Activated B cell treated with CpG ODN at 0.5 μM for 24 hours (primary cell): ENCODE measurements at regions of chr22 and their contacts with region 1.

Region 1: GRCh38 chr22:36331306-36331911 is 56.4 kb downstream of the MYH9 start:
- DNase-seq: peak; percentile 59
- ATAC-seq: peak; percentile 57
- H3K4me3 Mint-ChIP-seq: peak overlapping the region; percentile 82
- H3K27ac Mint-ChIP-seq: peak overlapping the region; percentile 99
- H3K4me1 Mint-ChIP-seq: peaks cover 95% of the 10 kb centered on the region
- H3K27me3 Mint-ChIP-seq: no peaks in the 10 kb centered on the region
- CTCF ChIP-seq: no peak

Region 2: DNA sequence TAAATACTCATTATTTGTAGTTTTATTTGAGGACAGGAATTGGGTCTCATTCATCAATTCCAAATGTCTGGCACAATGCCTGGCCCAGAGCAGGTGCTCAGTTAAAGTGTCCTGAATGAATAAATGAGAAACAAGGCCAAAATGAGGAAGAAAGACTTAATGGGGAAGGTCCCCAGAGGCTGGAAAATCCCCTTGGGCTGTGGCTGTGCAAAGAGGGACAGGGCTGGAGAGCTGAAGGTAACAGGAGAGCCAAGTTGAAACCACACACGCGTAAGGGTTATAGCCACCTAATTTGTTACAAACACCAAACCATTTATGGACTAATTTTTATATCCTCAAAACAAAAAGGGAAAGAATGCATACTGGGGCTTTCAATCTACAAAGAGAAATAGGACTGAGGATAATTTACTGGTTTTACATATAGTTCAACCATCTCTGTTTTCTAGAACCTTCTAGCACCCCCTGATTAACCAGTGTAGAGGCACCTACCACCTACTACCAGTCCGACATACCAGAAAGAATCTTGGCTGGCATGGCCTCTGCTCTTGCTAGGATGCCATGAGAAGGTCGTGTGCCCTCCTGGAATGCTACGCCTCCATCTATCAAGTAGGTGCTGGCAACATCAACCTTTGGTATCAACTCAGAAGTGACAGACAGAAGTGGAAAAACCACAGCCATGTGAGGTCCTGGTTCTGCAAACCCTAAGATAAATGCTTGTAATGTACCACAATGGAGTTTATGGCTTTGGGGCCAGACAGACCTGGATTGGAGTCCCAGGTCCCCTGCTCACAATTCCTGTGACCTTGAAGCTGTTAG is 28.0 kb after region 1 on chr22:
- CTCF ChIA-PET with region 1: interaction called, 3 read pairs
- POLR2A ChIA-PET with region 1: interaction called, 25 read pairs
- intact Hi-C with region 1: loop called (anchors 2 kb)
- DNase-seq: peak; percentile 59
- ATAC-seq: peak; percentile 85
- H3K4me3 Mint-ChIP-seq: peak overlapping the region; percentile 72
- H3K27ac Mint-ChIP-seq: peak overlapping the region; percentile 95
- H3K4me1 Mint-ChIP-seq: peaks cover 99% of the 10 kb centered on the region
- H3K27me3 Mint-ChIP-seq: no peaks in the 10 kb centered on the region
- CTCF ChIP-seq: no peak

Region 3: GRCh38 chr22:36369922-36370791 is 38.7 kb after region 1 on chr22:
- CTCF ChIA-PET with region 1: interaction called, 4 read pairs
- POLR2A ChIA-PET with region 1: interaction called, 66 read pairs
- intact Hi-C with region 1: loop called (anchors 1 kb)
- DNase-seq: peak; percentile 51
- ATAC-seq: peak; percentile 89
- H3K4me3 Mint-ChIP-seq: peak overlapping the region; percentile 79
- H3K27ac Mint-ChIP-seq: peak overlapping the region; percentile 91
- H3K4me1 Mint-ChIP-seq: peaks cover 96% of the 10 kb centered on the region
- H3K27me3 Mint-ChIP-seq: no peaks in the 10 kb centered on the region
- CTCF ChIP-seq: no peak

Region 4: DNA sequence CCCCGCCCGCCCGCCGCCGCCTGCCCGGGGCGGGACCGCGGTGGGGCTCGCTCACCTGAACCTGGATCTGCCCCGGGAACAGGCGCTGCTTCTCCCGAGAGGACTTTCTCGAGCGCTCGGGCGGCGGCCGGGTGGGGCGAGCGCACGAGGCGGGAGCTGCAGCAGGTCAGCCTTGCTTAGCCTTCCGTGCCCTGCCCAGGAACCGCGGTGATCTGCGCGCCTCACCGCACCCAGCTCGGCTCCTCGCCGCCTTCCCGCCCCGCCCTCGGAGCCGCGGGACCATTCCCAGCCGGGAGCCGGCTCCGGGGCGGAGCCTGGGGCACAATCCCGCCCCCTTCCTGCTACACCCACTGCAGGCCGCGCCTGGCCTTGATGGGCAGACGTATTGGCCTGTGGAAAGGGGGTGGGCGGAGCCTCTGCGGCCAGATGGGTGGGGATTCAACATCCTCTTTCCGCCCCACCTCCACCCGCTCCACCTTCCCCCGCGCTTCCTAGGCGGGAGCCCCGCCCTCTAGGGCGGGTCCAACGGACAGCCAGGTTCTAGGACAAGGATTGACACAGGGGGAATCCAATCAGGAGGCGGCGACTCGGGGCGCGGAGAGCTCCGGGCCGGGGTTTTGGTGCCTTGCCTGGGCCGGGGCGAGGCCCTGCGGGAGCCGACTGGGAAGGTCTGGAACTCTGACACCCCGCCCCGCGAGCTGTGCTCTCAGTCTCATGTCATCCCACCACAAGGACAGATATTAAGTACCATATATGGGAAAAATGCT is 56.5 kb after region 1 on chr22 and contains the start of gene MYH9:
- CTCF ChIA-PET with region 1: interaction called, 6 read pairs
- POLR2A ChIA-PET with region 1: interaction called, 86 read pairs
- intact Hi-C with region 1: loop called (anchors 1 kb)
- DNase-seq: peak; percentile 97
- ATAC-seq: peak; percentile 79
- H3K4me3 Mint-ChIP-seq: peak within 1 kb of the TSS; percentile 94
- H3K27ac Mint-ChIP-seq: peak within 1 kb of the TSS; percentile 97
- H3K4me1 Mint-ChIP-seq: peaks cover 64% of the 10 kb centered on the region
- H3K27me3 Mint-ChIP-seq: no peaks in the 10 kb centered on the region
- CTCF ChIP-seq: no peak
- total RNA-seq, gene MYH9: 714 and 755 TPM in 2 replicates

Region 5: GRCh38 chr22:36470162-36470993 is 139.0 kb after region 1 on chr22:
- CTCF ChIA-PET with region 1: interaction called, 30 read pairs
- POLR2A ChIA-PET with region 1: interaction called, 8 read pairs
- intact Hi-C with region 1: loop called (anchors 1 kb)
- DNase-seq: peak; percentile 62
- ATAC-seq: peak; percentile 96
- H3K4me3 Mint-ChIP-seq: no peak overlapping the region
- H3K27ac Mint-ChIP-seq: no peak overlapping the region
- H3K4me1 Mint-ChIP-seq: peaks cover 6% of the 10 kb centered on the region
- H3K27me3 Mint-ChIP-seq: no peaks in the 10 kb centered on the region
- CTCF ChIP-seq: no peak

Region 6: GRCh38 chr22:36528795-36529751 is 197.7 kb after region 1 on chr22 and contains the start of gene EIF3D:
- CTCF ChIA-PET with region 1: no interaction called
- POLR2A ChIA-PET with region 1: interaction called, 3 read pairs
- intact Hi-C with region 1: loop called (anchors 1 kb)
- DNase-seq: peak; percentile 96
- ATAC-seq: peak; percentile 92
- H3K4me3 Mint-ChIP-seq: peak within 1 kb of the TSS; percentile 94
- H3K27ac Mint-ChIP-seq: peak within 1 kb of the TSS; percentile 97
- H3K4me1 Mint-ChIP-seq: peaks cover 25% of the 10 kb centered on the region
- H3K27me3 Mint-ChIP-seq: no peaks in the 10 kb centered on the region
- CTCF ChIP-seq: no peak
- total RNA-seq, gene EIF3D: 285 and 301 TPM in 2 replicates